Naive thymus-derived CD4-positive, alpha-beta T cell (primary cell): ENCODE measurements at regions of chr6 and their contacts with region 1.

Region 1: DNA sequence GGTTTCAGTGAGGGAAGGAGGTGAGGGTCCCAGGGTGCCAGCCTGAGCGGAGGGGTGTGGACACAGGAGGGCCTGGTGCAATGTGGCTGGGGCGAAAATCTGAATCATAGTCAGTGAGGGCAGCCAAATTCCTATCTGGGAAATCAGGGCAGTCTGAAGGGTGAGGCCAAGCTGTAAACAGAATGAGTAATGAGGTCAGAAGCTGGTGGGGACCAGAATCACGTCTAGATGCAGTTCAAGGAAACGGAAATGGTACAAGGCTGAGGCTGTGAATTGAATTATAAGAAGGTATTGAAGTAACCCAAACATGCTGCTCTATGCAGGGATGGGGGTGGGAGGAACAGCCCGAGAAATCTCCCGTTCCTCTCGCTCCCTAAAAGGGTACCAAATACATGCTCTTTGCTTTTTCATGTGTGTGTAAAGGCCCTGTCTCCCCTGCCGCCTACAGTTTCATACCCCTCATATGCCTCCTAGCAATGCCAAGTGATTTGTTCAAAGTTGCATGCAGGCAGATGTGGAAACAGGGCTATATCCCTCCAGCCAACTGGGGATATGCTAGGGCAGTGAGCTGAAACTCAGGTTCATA is 35.3 kb upstream of the PIM1 start:
- DNase-seq: no peak
- ATAC-seq: peak; percentile 76
- H3K4me3 ChIP-seq: no peak overlapping the region
- H3K4me3 Mint-ChIP-seq: peak overlapping the region in 1 of 10 donors; percentile 10
- H3K27ac ChIP-seq: no peak overlapping the region
- H3K27ac Mint-ChIP-seq: peak overlapping the region in 5 of 9 donors; percentile 3 to 77 (median 42)
- H3K4me1 ChIP-seq: peaks cover 0 to 19% of the 10 kb centered on the region in 2 donors
- H3K4me1 Mint-ChIP-seq: peaks cover 0 to 27% (median 0%) of the 10 kb centered on the region in 7 donors
- H3K27me3 ChIP-seq: no peaks in the 10 kb centered on the region
- H3K27me3 Mint-ChIP-seq: no peaks in the 10 kb centered on the region

Region 2: DNA sequence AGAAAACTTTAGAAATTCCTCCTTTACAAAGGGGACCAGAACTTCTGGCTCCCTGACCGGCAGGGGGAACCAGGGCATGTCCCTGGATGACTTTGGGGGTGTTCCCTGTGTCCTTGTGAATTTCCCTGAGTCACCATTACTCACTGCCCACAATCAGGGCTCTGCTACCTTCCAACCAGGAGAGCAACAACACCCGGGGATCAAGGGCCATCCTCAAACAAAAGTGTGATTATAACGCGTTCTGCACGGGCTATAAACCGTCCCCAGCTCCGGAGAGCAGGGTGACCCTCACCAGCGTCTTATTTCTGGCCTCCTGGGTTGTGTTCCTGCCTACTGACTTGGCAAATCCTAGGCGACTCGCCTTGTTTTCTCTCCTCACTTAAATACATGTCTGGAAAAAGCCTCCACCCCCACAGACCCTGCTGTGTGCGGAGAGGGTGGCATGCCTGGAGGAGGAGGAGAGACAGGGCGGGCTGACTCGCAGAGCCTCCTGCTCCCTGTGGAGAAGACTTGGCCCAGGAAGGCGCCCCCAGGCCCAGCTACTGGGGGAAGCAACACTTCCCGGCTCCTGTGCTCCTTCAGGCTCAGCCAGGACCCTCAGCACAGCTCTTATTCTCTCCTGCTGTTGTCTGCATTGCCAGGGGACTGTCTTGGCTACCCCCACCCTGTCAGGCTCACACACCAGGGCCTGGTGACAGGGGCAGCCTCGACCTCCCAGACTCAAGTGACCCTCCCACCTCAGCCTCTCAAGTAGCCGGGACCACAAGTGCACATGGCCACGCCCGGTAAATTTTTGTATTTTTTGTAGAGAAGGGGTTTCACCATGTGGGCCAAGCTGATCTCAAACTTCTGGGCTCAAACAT is 75.1 kb before region 1 on chr6:
- CTCF ChIA-PET with region 1: no interaction called
- POLR2A ChIA-PET with region 1: no interaction called
- intact Hi-C with region 1: loop called in 1 of 2 experiments (anchors 2 kb)
- DNase-seq: no peak
- ATAC-seq: peak; percentile 76
- H3K4me3 ChIP-seq: no peak overlapping the region
- H3K4me3 Mint-ChIP-seq: no peak overlapping the region
- H3K27ac ChIP-seq: no peak overlapping the region
- H3K27ac Mint-ChIP-seq: no peak overlapping the region
- H3K4me1 ChIP-seq: no peaks in the 10 kb centered on the region
- H3K4me1 Mint-ChIP-seq: peaks cover 0 to 20% (median 0%) of the 10 kb centered on the region in 7 donors
- H3K27me3 ChIP-seq: no peaks in the 10 kb centered on the region
- H3K27me3 Mint-ChIP-seq: no peaks in the 10 kb centered on the region

Region 3: GRCh38 chr6:37257634-37258404 is 123.1 kb after region 1 on chr6 and contains the starts of genes TBC1D22B and TMEM217:
- CTCF ChIA-PET with region 1: no interaction called
- POLR2A ChIA-PET with region 1: no interaction called
- intact Hi-C with region 1: no loop called
- DNase-seq: peak; percentile 85 to 94 (median 93)
- ATAC-seq: peak; percentile 100
- H3K4me3 ChIP-seq: peak within 1 kb of the TSS; percentile 92
- H3K4me3 Mint-ChIP-seq: peak within 1 kb of the TSS; percentile 80 to 99 (median 90)
- H3K27ac ChIP-seq: peak within 1 kb of the TSS; percentile 87
- H3K27ac Mint-ChIP-seq: peak within 1 kb of the TSS; percentile 71 to 95 (median 88)
- H3K4me1 ChIP-seq: peaks cover 18 to 21% of the 10 kb centered on the region in 2 donors
- H3K4me1 Mint-ChIP-seq: peaks cover 30 to 58% (median 45%) of the 10 kb centered on the region in 7 donors
- H3K27me3 ChIP-seq: no peaks in the 10 kb centered on the region
- H3K27me3 Mint-ChIP-seq: no peaks in the 10 kb centered on the region
- total RNA-seq, gene TBC1D22B: 8.3 to 23.5 (median 9.5) TPM
- total RNA-seq, gene TMEM217: 0.78 to 2.8 (median 1.6) TPM in 3 of 5 experiments, not detected in the others